ENCODE measurements at regions of chr2 and their contacts with region 1.

Region 1: GRCh38 chr2:157492189-157492773 is 48.4 kb upstream of the CYTIP start:
- DNase-seq: peak; percentile 27 to 60
- ATAC-seq: peak in 7 of 8 donors; percentile 70 to 84 (median 74)
- H3K4me3 ChIP-seq: no peak overlapping the region
- H3K27ac ChIP-seq: no peak overlapping the region
- H3K4me1 ChIP-seq: no peaks in the 10 kb centered on the region
- H3K27me3 ChIP-seq: peaks cover 0 to 11% (median 0%) of the 10 kb centered on the region in 7 donors
- CTCF ChIP-seq: peak; percentile 45 to 78 (median 72)

Region 2: GRCh38 chr2:157302492-157303099 is 189.7 kb before region 1 on chr2:
- intact Hi-C with region 1: loop called in 1 of 10 experiments (anchors 10 kb)
- DNase-seq: peak in 1 of 2 donors; percentile 8
- ATAC-seq: peak in 4 of 8 donors; percentile 53 to 78 (median 62)
- H3K4me3 ChIP-seq: no peak overlapping the region
- H3K27ac ChIP-seq: no peak overlapping the region
- H3K4me1 ChIP-seq: peaks cover 0 to 4% (median 0%) of the 10 kb centered on the region in 9 donors
- H3K27me3 ChIP-seq: peaks cover 0 to 18% (median 9%) of the 10 kb centered on the region in 7 donors
- CTCF ChIP-seq: peak; percentile 56 to 85 (median 79)

Region 3: GRCh38 chr2:157327621-157328500 is 164.4 kb before region 1 on chr2:
- intact Hi-C with region 1: loop called in 3 of 10 experiments (anchors 5 to 10 kb)
- DNase-seq: peak; percentile 79
- ATAC-seq: peak; percentile 61 to 96 (median 91)
- H3K4me3 ChIP-seq: no peak overlapping the region
- H3K27ac ChIP-seq: no peak overlapping the region
- H3K4me1 ChIP-seq: peaks cover 0 to 12% (median 7%) of the 10 kb centered on the region in 9 donors
- H3K27me3 ChIP-seq: no peaks in the 10 kb centered on the region
- CTCF ChIP-seq: peak; percentile 70 to 97 (median 88)

Region 4: GRCh38 chr2:157751462-157752058 is 259.3 kb after region 1 on chr2:
- intact Hi-C with region 1: loop called in 1 of 10 experiments (anchors 10 kb)
- DNase-seq: no peak
- ATAC-seq: peak in 5 of 8 donors; percentile 26 to 72 (median 46)
- H3K4me3 ChIP-seq: no peak overlapping the region
- H3K27ac ChIP-seq: no peak overlapping the region
- H3K4me1 ChIP-seq: peaks cover 0 to 29% (median 5%) of the 10 kb centered on the region in 9 donors
- H3K27me3 ChIP-seq: no peaks in the 10 kb centered on the region
- CTCF ChIP-seq: no peak

Measured in heart right ventricle (tissue), 16 donors.